GM12878 (cell line): ENCODE measurements at regions of chr11 and their contacts with region 1.

Region 1: GRCh38 chr11:102614485-102614884 is 10.6 kb downstream of the MMP20 start:
- DNase-seq: no peak
- ATAC-seq: 0 out of 3 replicates have a peak, but pooled peaks have one; percentile 3
- H3K4me3 ChIP-seq: no peak overlapping the region
- H3K27ac ChIP-seq: no peak overlapping the region
- H3K4me1 ChIP-seq: peaks cover 18% of the 10 kb centered on the region
- H3K27me3 ChIP-seq: no peaks in the 10 kb centered on the region
- CTCF ChIP-seq: peak; percentile 18 to 55 (median 40); a peak in 5 of 6 replicates
- EP300 ChIP-seq: no peak
- POLR2A ChIP-seq: no peak
- RAD21 ChIP-seq: peak; percentile 80

Region 2: DNA sequence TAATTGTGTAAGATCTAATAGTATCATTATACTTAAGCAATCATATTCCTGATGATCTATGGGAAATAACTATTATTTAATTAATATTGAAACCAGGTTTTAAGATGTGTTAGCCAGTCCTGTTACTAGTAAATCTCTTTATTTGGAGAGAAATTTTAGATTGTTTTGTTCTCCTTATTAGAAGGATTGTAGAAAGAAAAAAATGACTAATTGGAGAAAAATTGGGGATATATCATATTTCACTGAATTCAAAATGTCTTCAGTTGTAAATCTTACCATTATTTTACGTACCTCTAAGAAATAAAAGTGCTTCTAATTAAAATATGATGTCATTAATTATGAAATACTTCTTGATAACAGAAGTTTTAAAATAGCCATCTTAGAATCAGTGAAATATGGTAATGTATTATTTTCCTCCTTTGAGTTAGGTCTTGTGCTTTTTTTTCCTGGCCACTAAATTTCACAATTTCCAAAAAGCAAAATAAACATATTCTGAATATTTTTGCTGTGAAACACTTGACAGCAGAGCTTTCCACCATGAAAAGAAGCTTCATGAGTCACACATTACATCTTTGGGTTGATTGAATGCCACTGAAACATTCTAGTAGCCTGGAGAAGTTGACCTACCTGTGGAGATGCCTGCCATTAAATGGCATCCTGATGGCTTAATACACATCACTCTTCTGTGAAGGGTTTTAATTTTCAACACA is 290.8 kb before region 1 on chr11:
- CTCF ChIA-PET with region 1: interaction called, 31 read pairs
- POLR2A ChIA-PET with region 1: interaction called, 4 read pairs
- RAD21 ChIA-PET with region 1: interaction called, 28 read pairs
- SMC1A ChIA-PET with region 1: interaction called, 10 read pairs
- in situ Hi-C with region 1: no loop called
- intact Hi-C with region 1: no loop called
- DNase-seq: no peak
- ATAC-seq: no peak
- H3K4me3 ChIP-seq: peak overlapping the region; percentile 49; the same call in 1 of the 2 replicates
- H3K27ac ChIP-seq: no peak overlapping the region
- H3K4me1 ChIP-seq: no peaks in the 10 kb centered on the region
- H3K27me3 ChIP-seq: no peaks in the 10 kb centered on the region
- CTCF ChIP-seq: no peak
- EP300 ChIP-seq: no peak
- POLR2A ChIP-seq: no peak
- RAD21 ChIP-seq: no peak

Region 3: DNA sequence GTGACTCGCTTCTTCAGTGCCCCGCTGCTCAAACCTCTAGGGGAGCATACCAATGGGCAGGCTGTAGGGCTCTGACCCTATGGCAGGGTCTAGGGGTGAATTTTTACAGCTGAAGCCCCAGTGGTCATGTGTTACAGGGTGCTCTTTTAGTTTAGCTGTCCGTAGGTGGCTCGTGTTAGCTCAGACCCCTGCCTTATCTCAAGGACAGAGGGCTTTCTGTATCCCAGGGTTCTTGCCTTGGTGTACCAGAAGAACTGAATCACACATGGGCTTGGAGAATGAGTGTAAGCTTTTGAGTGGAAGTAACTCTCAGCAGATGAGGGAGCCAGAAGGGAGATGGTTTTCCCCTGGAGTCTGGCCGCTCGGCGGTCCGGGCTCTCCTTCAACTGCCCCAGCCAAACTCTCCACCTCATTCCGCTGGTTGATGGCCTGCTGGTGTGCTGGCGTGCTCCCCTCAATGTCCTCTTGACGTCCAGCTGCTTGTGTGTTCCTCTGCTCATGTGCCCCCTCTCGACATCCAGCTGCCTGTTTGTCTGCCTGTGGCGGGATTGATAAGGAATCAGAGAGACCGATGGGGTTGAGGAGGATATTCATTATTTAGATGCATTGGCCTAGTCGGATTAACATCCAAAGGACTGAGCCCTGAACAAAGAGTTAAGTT is 229.9 kb before region 1 on chr11:
- CTCF ChIA-PET with region 1: interaction called, 172 read pairs
- POLR2A ChIA-PET with region 1: interaction called, 3 read pairs
- RAD21 ChIA-PET with region 1: interaction called, 112 read pairs
- SMC1A ChIA-PET with region 1: interaction called, 168 read pairs
- in situ Hi-C with region 1: no loop called
- intact Hi-C with region 1: no loop called
- DNase-seq: no peak
- ATAC-seq: no peak
- H3K4me3 ChIP-seq: no peak overlapping the region
- H3K27ac ChIP-seq: no peak overlapping the region
- H3K4me1 ChIP-seq: no peaks in the 10 kb centered on the region
- H3K27me3 ChIP-seq: no peaks in the 10 kb centered on the region
- CTCF ChIP-seq: no peak
- EP300 ChIP-seq: no peak
- POLR2A ChIP-seq: no peak
- RAD21 ChIP-seq: no peak

Region 4: GRCh38 chr11:102476812-102477211 is 137.7 kb before region 1 on chr11:
- CTCF ChIA-PET with region 1: interaction called, 32 read pairs
- POLR2A ChIA-PET with region 1: no interaction called
- RAD21 ChIA-PET with region 1: interaction called, 19 read pairs
- SMC1A ChIA-PET with region 1: interaction called, 8 read pairs
- in situ Hi-C with region 1: no loop called
- intact Hi-C with region 1: no loop called
- DNase-seq: no peak
- ATAC-seq: peak; percentile 29
- H3K4me3 ChIP-seq: no peak overlapping the region
- H3K27ac ChIP-seq: no peak overlapping the region
- H3K4me1 ChIP-seq: peaks cover 22% of the 10 kb centered on the region
- H3K27me3 ChIP-seq: no peaks in the 10 kb centered on the region
- CTCF ChIP-seq: no peak
- EP300 ChIP-seq: no peak
- POLR2A ChIP-seq: no peak
- RAD21 ChIP-seq: no peak

Region 5: DNA sequence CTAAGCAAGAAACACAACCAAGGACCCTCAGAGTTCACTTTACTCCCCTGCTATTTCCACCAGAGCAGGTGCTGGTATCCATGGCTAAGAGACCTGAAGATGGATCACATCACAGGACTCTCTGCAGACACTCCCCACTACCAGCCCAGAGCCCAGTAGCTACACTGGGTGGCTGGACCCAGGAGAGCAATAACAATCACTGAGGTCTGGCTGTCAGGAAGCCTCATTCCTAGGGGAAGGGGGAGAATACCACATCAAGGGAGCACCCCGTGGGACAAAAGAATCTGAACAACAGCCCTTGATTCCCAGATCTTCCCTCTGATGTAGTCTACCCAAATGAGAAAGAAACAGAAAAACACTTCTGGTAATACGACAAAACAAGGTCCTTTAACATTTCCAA is 74.9 kb before region 1 on chr11:
- CTCF ChIA-PET with region 1: interaction called, 65 read pairs
- POLR2A ChIA-PET with region 1: interaction called, 3 read pairs
- RAD21 ChIA-PET with region 1: interaction called, 90 read pairs
- SMC1A ChIA-PET with region 1: interaction called, 99 read pairs
- in situ Hi-C with region 1: no loop called
- intact Hi-C with region 1: no loop called
- DNase-seq: no peak
- ATAC-seq: no peak
- H3K4me3 ChIP-seq: no peak overlapping the region
- H3K27ac ChIP-seq: no peak overlapping the region
- H3K4me1 ChIP-seq: no peaks in the 10 kb centered on the region
- H3K27me3 ChIP-seq: no peaks in the 10 kb centered on the region
- CTCF ChIP-seq: no peak
- EP300 ChIP-seq: no peak
- POLR2A ChIP-seq: no peak
- RAD21 ChIP-seq: no peak

Region 6: DNA sequence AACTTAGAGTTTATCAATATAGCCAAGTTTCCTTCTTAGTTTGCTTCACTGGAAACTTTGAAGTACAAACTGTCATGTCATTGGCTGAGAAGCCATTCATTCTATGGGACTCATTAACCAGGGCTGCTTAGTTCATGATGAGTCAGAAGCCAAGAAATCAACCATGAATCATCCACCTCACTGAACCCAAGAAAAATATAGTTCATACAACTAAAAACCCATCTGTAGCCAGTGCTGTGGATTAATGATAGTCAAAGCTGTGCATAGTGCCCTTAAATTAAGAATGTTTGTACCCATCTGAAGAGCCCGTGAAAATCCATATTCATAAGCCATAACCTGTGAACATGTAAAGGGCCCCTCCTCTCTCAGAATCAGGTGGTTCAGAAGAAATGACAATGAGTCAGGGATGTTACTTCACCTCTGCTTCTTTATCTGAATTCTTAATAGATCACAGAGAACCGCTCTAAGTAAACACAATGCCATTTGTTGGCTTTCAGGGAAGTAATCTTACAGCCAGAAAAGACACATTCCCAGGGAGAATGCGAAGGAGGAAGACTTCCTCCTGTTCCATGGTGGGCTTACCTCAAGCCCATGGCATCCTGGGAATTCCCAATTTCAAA is 14.7 kb before region 1 on chr11:
- CTCF ChIA-PET with region 1: interaction called, 130 read pairs
- POLR2A ChIA-PET with region 1: interaction called, 12 read pairs
- RAD21 ChIA-PET with region 1: interaction called, 94 read pairs
- SMC1A ChIA-PET with region 1: interaction called, 125 read pairs
- in situ Hi-C with region 1: no loop called
- intact Hi-C with region 1: no loop called
- DNase-seq: no peak
- ATAC-seq: peak; percentile 94
- H3K4me3 ChIP-seq: no peak overlapping the region
- H3K27ac ChIP-seq: 0 out of 2 replicates have a peak overlapping the region, but pooled peaks have one; percentile 16
- H3K4me1 ChIP-seq: peaks cover 3% of the 10 kb centered on the region; the same call in 1 of the 2 replicates
- H3K27me3 ChIP-seq: no peaks in the 10 kb centered on the region
- CTCF ChIP-seq: no peak
- EP300 ChIP-seq: peak; percentile 35 to 50; a peak in 3 of 4 replicates
- POLR2A ChIP-seq: no peak
- RAD21 ChIP-seq: no peak

Region 7: GRCh38 chr11:102900346-102900745 is 285.9 kb after region 1 on chr11:
- CTCF ChIA-PET with region 1: no interaction called
- POLR2A ChIA-PET with region 1: no interaction called
- RAD21 ChIA-PET with region 1: no interaction called
- SMC1A ChIA-PET with region 1: no interaction called
- in situ Hi-C with region 1: no loop called
- intact Hi-C with region 1: no loop called
- DNase-seq: no peak
- ATAC-seq: no peak
- H3K4me3 ChIP-seq: no peak overlapping the region
- H3K27ac ChIP-seq: no peak overlapping the region
- H3K4me1 ChIP-seq: no peaks in the 10 kb centered on the region
- H3K27me3 ChIP-seq: no peaks in the 10 kb centered on the region
- CTCF ChIP-seq: no peak
- EP300 ChIP-seq: no peak
- POLR2A ChIP-seq: no peak
- RAD21 ChIP-seq: no peak

Region 8: GRCh38 chr11:103031834-103032233 is 417.3 kb after region 1 on chr11:
- CTCF ChIA-PET with region 1: no interaction called
- POLR2A ChIA-PET with region 1: no interaction called
- RAD21 ChIA-PET with region 1: no interaction called
- SMC1A ChIA-PET with region 1: no interaction called
- in situ Hi-C with region 1: no loop called
- intact Hi-C with region 1: no loop called
- DNase-seq: no peak
- ATAC-seq: no peak
- H3K4me3 ChIP-seq: no peak overlapping the region
- H3K27ac ChIP-seq: no peak overlapping the region
- H3K4me1 ChIP-seq: no peaks in the 10 kb centered on the region
- H3K27me3 ChIP-seq: no peaks in the 10 kb centered on the region
- CTCF ChIP-seq: no peak
- EP300 ChIP-seq: no peak
- POLR2A ChIP-seq: no peak
- RAD21 ChIP-seq: no peak